ENCODE measurements at regions of chr15 and their contacts with region 1.

Region 1: DNA sequence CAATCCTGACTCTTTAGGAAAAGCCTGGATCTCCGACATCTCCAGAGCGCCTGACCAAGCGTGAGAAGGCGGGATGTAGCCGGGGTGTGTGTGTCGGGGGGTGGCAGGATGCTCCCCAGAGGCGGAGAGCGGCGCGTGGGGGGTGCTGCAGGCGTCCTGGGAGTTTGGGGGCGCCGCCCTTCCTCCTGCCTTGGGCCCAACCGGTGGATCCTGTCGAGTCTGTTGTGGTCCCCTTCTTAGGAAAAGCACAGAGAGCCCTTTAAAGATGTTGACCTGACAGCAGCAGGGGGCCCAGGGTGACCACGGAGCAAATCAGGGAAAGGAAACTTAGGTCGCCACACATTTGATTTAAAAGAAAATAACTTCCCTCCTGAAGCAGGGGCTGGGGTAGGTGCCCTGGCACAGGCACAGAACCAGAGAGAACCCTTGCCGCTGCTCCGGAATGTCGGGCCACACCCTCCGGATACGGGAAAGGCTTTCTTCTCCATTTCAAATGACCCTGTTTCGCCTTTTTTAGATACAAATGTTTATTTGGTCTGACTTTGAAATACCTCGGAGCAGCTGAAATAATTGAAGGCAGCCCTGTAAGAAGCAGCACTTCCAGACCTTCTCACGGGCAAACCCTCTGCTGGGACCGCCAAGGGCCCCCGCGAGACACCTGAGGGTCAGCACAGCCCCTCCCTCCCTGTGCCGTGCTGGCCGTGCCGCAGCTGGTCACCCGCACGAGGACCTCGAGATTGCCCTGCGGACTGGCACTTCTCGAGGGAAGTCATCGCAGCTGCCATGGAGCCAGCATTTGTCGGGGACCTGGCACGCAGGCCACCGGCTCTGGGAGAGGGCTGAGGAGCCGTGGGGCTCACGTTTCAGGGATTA is 102.9 kb upstream of the KLF13 start:
- DNase-seq: peak; percentile 18
- H3K4me3 ChIP-seq: peak overlapping the region in 1 of 3 experiments; percentile 27
- H3K27ac ChIP-seq: no peak overlapping the region
- H3K4me1 ChIP-seq: peaks cover 11% of the 10 kb centered on the region
- H3K27me3 ChIP-seq: peaks cover 14 to 27% of the 10 kb centered on the region in 2 experiments
- CTCF ChIP-seq: no peak
- POLR2A ChIP-seq: no peak

Region 2: GRCh38 chr15:31280046-31280830 is 56.5 kb after region 1 on chr15:
- CTCF ChIA-PET with region 1: no interaction called
- POLR2A ChIA-PET with region 1: no interaction called
- dilution Hi-C with region 1: no loop called
- intact Hi-C with region 1: loop called (anchors 5 kb)
- DNase-seq: no peak
- H3K4me3 ChIP-seq: no peak overlapping the region
- H3K27ac ChIP-seq: no peak overlapping the region
- H3K4me1 ChIP-seq: no peaks in the 10 kb centered on the region
- H3K27me3 ChIP-seq: no peaks in the 10 kb centered on the region
- CTCF ChIP-seq: no peak
- POLR2A ChIP-seq: no peak

Region 3: DNA sequence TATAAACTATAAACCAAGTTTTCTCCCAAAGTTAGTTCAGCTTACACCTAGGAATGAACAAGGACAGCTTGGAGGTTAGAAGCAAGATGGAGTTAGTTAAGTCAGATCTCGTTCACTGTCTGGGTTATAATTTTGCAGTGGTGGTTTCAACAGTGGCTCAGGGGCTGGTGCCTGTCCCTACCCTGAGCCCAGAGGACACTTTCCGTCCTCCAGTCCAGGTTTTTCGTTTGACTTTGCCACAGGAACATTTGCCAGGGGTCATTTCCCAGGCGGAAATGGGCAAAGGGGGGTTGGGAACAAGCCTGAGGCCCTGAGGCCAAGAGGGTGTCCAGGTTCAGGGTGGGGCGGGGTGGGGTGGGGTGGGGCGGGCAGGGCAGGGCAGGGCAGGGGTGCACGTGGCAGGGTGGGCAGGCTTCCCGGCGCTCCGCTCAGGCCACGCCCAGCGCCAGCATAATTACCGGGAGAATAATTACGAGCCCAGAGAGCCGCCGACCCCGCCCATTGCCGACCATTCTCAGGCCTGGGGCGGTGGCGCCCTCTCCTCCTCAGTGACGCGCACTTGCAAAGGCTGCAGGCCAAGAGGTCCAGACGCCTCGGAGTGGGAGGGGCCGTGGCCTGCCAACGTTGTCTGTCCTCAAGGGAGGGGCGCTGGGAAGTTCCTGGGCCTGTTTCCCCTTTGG is 173.3 kb after region 1 on chr15:
- CTCF ChIA-PET with region 1: no interaction called
- POLR2A ChIA-PET with region 1: no interaction called
- dilution Hi-C with region 1: no loop called
- intact Hi-C with region 1: no loop called
- DNase-seq: peak; percentile 67
- H3K4me3 ChIP-seq: no peak overlapping the region
- H3K27ac ChIP-seq: peak overlapping the region; percentile 38
- H3K4me1 ChIP-seq: peaks cover 20% of the 10 kb centered on the region
- H3K27me3 ChIP-seq: no peaks in the 10 kb centered on the region
- CTCF ChIP-seq: no peak
- POLR2A ChIP-seq: no peak